ENCODE measurements at regions of chr15 and their contacts with region 1.

Region 1: GRCh38 chr15:77409259-77410156 is 10.4 kb downstream of the PEAK1 start:
- DNase-seq: no peak
- ATAC-seq: no peak
- H3K4me3 ChIP-seq: no peak overlapping the region
- H3K27ac ChIP-seq: no peak overlapping the region
- H3K4me1 ChIP-seq: peaks cover 2% of the 10 kb centered on the region
- H3K27me3 ChIP-seq: no peaks in the 10 kb centered on the region

Region 2: DNA sequence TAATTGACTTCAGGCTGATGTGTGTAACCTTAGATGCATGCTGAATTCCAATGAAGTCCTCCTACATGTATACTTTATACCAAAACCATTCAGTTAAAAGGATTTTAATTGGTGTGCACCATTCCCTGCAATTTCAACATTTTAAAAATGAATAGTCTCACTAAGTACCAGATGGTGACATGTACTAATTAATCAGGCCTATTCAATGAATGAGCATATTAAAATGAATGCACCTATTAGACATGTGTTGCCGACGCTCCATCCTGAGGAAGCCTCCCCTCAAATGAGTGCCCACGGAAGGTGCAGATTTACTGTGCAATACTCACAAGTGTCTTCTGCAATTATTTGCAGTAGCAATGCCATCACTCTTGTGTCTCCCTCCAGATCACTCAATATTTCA is 213.9 kb before region 1 on chr15:
- intact Hi-C with region 1: loop called in 1 of 4 experiments (anchors 5 kb)
- DNase-seq: no peak
- ATAC-seq: no peak
- H3K4me3 ChIP-seq: no peak overlapping the region
- H3K27ac ChIP-seq: no peak overlapping the region
- H3K4me1 ChIP-seq: peaks cover 2% of the 10 kb centered on the region
- H3K27me3 ChIP-seq: no peaks in the 10 kb centered on the region

Region 3: GRCh38 chr15:77352887-77353286 is 56.6 kb before region 1 on chr15:
- intact Hi-C with region 1: loop called in 1 of 4 experiments (anchors 10 kb)
- DNase-seq: no peak
- ATAC-seq: no peak
- H3K4me3 ChIP-seq: no peak overlapping the region
- H3K27ac ChIP-seq: no peak overlapping the region
- H3K4me1 ChIP-seq: peaks cover 5% of the 10 kb centered on the region
- H3K27me3 ChIP-seq: no peaks in the 10 kb centered on the region

Region 4: GRCh38 chr15:77695961-77696582 is 286.6 kb after region 1 on chr15:
- intact Hi-C with region 1: no loop called
- DNase-seq: peak in 1 of 3 donors; percentile 63
- ATAC-seq: peak in 1 of 2 donors; percentile 31
- H3K4me3 ChIP-seq: no peak overlapping the region
- H3K27ac ChIP-seq: no peak overlapping the region
- H3K4me1 ChIP-seq: no peaks in the 10 kb centered on the region
- H3K27me3 ChIP-seq: no peaks in the 10 kb centered on the region

Measured in right cardiac atrium (tissue), 5 donors.